ENCODE measurements at regions of chr1 and their contacts with region 1.

Region 1: DNA sequence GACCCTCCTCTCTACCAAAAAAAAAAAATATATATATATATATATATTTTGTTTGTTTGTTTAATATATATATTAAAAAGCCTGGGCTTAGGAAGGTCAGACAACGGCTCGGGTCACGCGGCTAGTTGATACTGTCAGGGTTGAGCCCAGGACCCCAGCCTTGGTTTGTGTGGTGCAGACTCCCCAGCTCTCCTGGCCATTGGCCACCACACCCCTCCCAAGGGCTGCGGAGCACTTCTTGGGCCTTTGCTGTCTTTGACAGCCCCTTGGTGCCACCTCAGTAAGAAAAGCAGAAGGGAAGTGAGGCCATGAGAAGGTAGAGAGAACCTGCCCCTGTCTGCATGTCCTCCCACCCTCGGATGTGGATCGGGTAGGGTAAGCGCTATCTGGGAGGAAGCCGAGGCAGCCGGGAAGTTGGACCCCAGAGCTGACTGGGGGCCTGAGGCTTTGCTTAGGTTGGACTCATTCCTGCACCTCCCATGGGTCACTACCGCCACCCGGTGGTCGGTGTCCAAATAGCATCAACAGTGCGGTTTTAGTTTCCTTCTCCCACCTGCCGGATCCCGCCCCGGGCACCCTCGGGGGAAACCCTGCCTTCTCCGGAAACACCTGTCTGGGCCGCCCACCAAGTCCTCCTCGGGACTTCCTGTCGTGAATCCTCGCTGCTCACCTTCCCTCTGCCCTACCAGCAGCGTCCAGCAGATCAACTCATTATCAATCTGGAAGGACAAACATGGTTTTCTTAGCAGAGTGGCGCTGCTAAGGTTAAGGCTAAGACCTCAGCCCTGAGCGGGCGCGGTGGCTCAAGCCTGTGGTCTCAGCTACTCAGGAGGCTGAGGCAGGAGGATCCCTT is 29.8 kb upstream of the GNPAT start:
- DNase-seq: peak; percentile 75
- ATAC-seq: peak; percentile 82 to 86

Region 2: DNA sequence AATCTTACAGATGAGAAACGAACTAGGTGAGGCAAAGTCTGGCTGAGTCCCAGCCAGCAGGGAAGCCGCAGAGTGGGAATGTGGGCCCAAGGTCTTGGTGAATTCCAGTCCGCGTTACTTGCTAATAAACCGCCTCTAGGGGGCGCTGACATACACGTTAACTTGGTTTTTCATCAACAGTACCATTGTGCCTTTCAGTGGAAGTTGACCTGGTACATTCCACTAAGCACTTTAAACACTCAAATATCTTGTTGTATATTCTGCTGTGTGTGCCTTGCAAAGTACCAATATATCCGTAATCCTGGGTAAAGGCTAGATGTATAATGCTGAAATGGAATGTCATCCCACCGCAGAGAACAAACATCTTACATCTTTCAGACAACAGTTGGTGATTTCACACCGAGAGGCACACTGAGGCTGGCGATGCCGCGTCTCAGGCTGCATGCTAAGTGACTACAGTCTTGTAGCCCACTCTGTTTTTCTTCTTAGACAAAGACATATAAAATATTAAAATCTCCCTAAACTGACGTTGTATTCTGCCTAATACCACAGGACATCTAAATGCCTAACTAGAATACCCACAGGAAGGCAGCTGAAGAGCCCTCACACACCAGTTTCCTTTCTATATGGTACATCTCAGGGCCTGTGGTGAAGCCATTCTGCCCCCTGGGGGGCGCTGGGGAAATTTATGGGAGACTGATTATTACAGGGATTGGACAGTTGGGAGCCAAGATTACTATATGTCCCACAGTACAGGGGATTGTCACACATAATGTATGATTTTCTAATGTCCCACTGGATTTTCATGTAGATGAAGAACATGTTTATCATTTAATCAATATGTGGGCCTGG is 293.7 kb before region 1 on chr1:
- intact Hi-C with region 1: loop called (anchors 2 to 10 kb)
- DNase-seq: peak; percentile 78
- ATAC-seq: peak; percentile 84 to 87

Region 3: DNA sequence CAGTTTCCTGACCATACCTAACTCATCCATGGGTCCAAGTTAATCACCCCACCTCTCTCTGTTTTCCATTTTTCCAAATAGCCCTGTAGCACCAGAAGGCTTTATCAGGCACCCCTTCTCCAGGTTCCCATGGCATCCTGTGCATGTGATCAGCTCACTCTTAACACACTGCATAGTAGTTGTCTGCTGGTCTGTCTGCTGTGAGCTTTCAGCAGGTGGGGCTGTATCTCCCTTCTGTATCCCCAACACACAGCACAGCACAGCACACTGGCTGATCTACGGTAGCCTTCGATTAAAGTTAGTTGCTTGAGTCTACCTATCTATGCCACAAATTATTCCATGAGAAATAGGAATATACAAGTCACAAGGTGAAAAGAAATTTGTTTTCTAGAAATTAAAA is 288.6 kb before region 1 on chr1:
- intact Hi-C with region 1: loop called (anchors 2 to 10 kb)
- DNase-seq: no peak
- ATAC-seq: no peak

Measured in left cardiac atrium (tissue), 4 donors.